Aorta (tissue), 5 donors: ENCODE measurements at regions of chr6 and their contacts with region 1.

Region 1: DNA sequence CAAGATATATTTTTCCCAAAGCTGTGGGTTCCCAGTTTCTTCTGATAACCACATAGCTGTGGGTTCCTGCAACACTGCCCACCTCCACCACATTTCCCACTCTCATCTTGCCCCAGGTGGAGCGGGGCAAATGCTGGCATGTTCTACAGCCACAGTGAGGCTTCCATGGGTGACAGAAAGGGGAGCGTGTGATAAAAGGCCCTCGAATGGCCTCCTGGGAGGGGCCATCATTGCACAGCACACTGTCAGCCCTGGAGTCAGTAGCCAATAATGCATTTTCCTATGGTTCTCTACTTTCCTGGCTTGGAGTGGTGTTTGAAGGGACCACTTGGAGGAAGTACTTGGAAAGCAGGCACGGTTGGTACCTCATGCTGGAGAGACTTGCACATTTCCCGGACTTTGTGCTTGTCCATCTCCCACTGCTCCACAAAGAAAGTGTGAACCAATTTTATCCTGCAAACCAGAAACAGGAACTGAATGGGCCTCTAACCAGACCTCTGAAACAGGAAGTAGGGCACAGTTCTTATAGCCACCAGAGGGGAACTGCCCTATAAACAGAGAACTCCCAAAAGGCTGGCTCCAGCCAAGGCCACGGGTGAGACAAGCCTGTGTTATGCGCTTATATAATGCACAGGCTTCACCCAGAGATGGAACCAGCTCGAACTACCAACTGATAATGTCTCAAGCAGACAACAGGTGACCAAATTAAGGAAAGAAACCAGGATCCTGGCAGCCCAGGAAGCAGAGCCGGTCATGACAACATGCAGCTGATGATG is 8.6 kb downstream of the MAP3K5 start:
- DNase-seq: peak in 1 of 2 donors; percentile 74
- ATAC-seq: peak; percentile 54
- H3K4me3 ChIP-seq: no peak overlapping the region
- H3K27ac ChIP-seq: peak overlapping the region in 1 of 2 donors; percentile 26
- H3K4me1 ChIP-seq: peaks cover 3 to 35% of the 10 kb centered on the region in 2 donors
- H3K27me3 ChIP-seq: no peaks in the 10 kb centered on the region

Region 2: DNA sequence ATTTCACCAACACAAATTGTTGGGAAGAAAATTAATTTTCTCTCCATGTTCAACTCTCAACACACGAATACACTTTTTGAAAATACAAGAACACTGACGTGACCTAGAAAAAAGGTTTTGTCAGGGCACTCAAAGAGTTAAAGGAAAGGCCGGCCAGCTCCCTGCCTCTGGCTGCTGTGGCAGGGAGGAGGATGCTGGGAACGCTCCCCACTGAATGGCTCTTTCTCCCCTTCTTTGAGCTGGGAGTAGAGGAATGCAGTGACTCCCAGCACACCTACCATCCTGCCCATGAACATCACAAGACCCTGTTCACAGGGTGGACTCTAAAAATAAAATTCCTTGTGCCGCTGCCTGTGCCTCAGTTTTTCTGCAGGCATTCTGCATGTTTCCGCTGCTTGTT is 38.4 kb before region 1 on chr6:
- intact Hi-C with region 1: loop called in 1 of 2 experiments (anchors 5 kb)
- DNase-seq: no peak
- ATAC-seq: no peak
- H3K4me3 ChIP-seq: peak overlapping the region; percentile 2 to 84
- H3K27ac ChIP-seq: peak overlapping the region in 1 of 2 donors; percentile 40
- H3K4me1 ChIP-seq: peaks cover 3 to 7% of the 10 kb centered on the region in 2 donors
- H3K27me3 ChIP-seq: no peaks in the 10 kb centered on the region